Activated naive CD4-positive, alpha-beta T cell treated with anti-CD3 and anti-CD28 coated beads for 36 hours (primary cell): ENCODE measurements at regions of chr17 and their contacts with region 1.

Region 1: DNA sequence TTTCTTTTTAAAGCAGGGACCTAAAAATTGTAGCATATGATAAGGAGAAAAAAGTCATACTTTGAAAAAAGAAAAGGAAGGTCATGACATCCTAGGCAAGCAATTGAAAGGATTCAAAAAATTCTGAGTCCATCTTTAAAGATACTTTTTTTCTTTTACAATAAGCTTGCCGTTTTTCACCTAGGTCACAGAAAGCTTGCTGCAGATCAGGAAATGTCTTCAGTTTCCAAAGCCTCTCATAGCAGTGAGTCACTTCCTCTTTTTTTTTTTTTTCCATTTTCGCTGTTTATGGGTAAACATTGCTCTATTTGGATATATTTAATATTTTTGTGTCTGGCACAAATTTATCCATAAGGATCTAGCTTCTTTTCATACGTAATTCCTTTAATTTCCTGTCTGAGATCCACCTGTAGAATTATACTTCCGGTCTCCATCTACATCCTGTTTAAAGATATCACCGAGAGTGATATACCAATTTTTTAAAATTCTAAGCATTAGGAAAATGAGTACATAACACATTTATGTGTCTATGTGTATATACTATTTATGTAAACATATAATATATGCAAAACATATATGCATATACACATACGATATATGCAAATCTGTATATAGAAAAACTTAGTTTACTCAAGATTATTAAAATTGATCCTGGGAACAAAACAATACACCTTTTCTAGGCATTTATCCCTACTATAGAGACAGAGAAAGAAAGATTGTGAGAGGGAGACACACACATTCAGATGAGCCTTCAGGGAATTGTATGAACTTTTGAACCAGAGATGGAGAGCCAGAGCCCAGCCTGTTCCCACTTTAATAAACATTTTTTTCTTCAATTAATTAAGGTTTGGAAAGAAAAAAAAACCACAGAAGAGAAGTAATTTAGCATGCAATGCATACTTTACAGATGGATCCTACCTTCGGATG is 134.4 kb downstream of the SKAP1 start:
- DNase-seq: no peak
- H3K4me3 Mint-ChIP-seq: peak overlapping the region; percentile 64
- H3K27ac Mint-ChIP-seq: peak overlapping the region; percentile 87
- H3K4me1 Mint-ChIP-seq: peaks cover 66% of the 10 kb centered on the region
- H3K27me3 Mint-ChIP-seq: no peaks in the 10 kb centered on the region

Region 2: GRCh38 chr17:48259694-48260291 is 35.8 kb before region 1 on chr17:
- CTCF ChIA-PET with region 1: interaction called, 9 read pairs
- intact Hi-C with region 1: loop called (anchors 5 kb)
- DNase-seq: peak; percentile 18
- H3K4me3 Mint-ChIP-seq: no peak overlapping the region
- H3K27ac Mint-ChIP-seq: no peak overlapping the region
- H3K4me1 Mint-ChIP-seq: peaks cover 5% of the 10 kb centered on the region
- H3K27me3 Mint-ChIP-seq: no peaks in the 10 kb centered on the region

Region 3: DNA sequence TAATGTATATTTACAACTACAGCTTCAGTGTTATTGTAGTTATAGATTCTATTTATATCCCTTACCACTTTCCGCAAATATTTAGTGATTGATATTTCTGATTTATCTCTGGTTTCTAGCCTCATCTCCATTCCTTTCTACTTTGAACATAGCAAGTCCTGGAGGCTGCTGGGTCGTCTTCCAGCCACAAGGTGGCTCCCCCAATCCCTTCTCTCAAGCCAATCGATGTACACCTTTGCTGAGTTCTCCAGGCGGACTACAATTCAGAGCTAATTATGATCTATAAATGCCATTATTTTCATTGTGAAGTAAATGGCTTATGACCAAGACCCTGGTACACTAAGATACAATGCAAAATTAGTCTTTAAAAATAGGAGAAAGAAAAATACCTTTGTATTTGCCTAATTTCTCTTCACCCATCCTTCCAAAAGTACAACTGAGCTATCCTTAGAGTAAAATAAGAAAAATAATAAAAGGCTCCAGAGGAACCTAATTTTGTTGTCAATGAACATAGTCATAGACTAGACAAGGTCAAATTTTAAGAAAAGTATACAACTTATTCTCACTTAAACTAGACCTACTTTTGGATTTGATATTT is 12.3 kb after region 1 on chr17:
- CTCF ChIA-PET with region 1: interaction called, 14 read pairs
- intact Hi-C with region 1: no loop called
- DNase-seq: peak; percentile 67
- H3K4me3 Mint-ChIP-seq: no peak overlapping the region
- H3K27ac Mint-ChIP-seq: no peak overlapping the region
- H3K4me1 Mint-ChIP-seq: peaks cover 18% of the 10 kb centered on the region
- H3K27me3 Mint-ChIP-seq: no peaks in the 10 kb centered on the region

Region 4: GRCh38 chr17:48451489-48451888 is 155.9 kb after region 1 on chr17:
- CTCF ChIA-PET with region 1: no interaction called
- intact Hi-C with region 1: no loop called
- DNase-seq: no peak
- H3K4me3 Mint-ChIP-seq: no peak overlapping the region
- H3K27ac Mint-ChIP-seq: no peak overlapping the region
- H3K4me1 Mint-ChIP-seq: peaks cover 51% of the 10 kb centered on the region
- H3K27me3 Mint-ChIP-seq: no peaks in the 10 kb centered on the region